ENCODE measurements at regions of chr15 and their contacts with region 1.

Region 1: DNA sequence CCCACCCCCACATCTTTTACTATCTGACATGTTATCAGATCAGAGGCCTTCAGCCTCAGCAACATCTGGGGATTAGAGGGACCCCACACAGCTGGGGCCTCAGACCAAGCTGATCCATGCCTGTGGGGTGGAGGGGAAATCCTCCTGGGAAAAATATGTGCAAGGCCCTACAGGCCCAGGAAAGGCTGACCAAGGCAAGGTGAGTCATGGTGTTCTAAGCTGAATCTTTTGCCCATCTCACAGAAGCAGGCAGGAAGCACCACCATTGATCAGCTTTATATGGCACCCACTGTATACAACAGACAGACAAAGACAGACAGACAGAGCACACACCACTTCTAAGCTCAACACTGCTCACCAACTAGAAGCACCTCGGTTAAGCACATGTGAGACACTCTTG is 12.4 kb upstream of the PARP6 start:
- DNase-seq: no peak
- H3K4me3 ChIP-seq: no peak overlapping the region
- H3K27ac ChIP-seq: no peak overlapping the region
- H3K4me1 ChIP-seq: no peaks in the 10 kb centered on the region
- H3K27me3 ChIP-seq: no peaks in the 10 kb centered on the region
- CTCF ChIP-seq: no peak
- EP300 ChIP-seq: no peak
- POLR2A ChIP-seq: no peak

Region 2: DNA sequence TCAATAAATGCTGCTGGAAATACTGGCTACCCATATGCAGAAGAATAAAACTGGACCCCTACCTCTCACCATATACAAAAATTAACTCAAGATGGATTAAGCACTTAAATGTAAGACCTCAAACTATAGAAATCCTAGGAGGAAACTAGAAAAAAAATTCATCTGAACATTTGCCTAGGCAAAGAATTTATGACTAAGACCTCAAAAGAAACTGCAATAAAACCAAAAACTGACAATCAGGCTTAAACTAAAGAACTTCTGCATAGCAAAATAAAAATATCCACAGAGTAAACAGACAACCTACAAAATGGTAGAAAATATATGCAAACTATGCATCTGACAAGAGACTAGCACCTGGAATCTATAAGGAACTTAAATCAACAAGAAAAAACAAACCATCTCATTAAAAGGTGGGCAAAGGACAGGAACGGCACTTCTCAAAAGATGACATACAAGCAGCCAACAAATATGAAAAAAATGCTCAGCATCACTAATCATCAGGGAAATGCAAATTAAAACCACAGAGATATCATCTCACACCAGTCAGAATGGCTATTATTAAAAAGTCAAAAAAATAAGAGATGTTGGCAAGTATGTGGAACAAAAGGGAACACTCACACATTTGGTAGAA is 213.8 kb before region 1 on chr15:
- intact Hi-C with region 1: no loop called
- DNase-seq: no peak
- H3K4me3 ChIP-seq: no peak overlapping the region
- H3K27ac ChIP-seq: no peak overlapping the region
- H3K4me1 ChIP-seq: peaks cover 0 to 42% (median 5%) of the 10 kb centered on the region in 4 donors
- H3K27me3 ChIP-seq: no peaks in the 10 kb centered on the region
- CTCF ChIP-seq: no peak
- EP300 ChIP-seq: no peak
- POLR2A ChIP-seq: no peak

Region 3: GRCh38 chr15:72199711-72200212 is 85.0 kb before region 1 on chr15:
- intact Hi-C with region 1: loop called (anchors 5 kb)
- DNase-seq: peak; percentile 85 to 93
- H3K4me3 ChIP-seq: no peak overlapping the region
- H3K27ac ChIP-seq: peak overlapping the region in 2 of 5 donors; percentile 22 to 52
- H3K4me1 ChIP-seq: peaks cover 14 to 63% (median 26%) of the 10 kb centered on the region in 4 donors
- H3K27me3 ChIP-seq: peaks cover 0 to 14% (median 10%) of the 10 kb centered on the region in 3 donors
- CTCF ChIP-seq: peak in 6 of 7 experiments; percentile 26 to 94 (median 90)
- EP300 ChIP-seq: no peak
- POLR2A ChIP-seq: no peak